Dorsolateral prefrontal cortex (tissue), 120 donors: ENCODE measurements at regions of chr15 and their contacts with region 1.

Region 1: DNA sequence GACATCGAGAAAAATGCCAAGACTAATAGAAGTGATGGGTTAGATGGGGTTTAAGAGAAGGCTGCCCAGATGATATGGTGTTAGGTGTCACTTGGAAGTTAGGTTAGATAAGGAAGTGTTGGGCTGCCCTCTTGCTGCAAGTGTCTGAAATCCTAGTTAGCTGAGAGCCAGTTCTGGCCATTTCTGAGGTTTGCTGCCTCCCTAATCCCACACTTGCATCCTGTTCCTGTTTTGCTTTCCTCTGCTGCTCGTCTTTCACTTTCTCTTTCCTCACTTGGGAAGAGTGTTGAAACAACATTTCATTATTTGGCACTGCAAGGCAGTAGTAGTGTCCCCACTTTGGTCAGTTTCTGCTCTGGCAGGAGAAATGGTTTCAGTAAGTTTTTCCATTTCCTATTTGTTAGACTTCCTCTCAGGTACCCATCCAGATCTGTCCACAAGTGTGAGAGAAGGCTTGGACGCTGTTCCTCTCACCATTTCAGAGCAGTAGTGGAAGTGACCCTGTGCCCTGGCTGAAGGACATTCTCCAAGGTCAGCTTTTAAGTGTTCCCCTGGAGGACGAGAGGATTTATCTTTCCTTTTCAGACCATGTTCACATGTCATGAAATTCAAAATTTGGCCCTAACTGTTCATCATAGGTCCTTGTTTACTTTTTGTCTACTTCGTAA is 93.3 kb downstream of the ADAMTSL3 start:
- DNase-seq: peak in 1 of 10 donors; percentile 40
- H3K4me3 ChIP-seq: no peak overlapping the region
- H3K27ac ChIP-seq: no peak overlapping the region
- H3K27me3 ChIP-seq: no peaks in the 10 kb centered on the region
- CTCF ChIP-seq: peak in 49 of 56 donors; percentile 0 to 68 (median 45)

Region 2: DNA sequence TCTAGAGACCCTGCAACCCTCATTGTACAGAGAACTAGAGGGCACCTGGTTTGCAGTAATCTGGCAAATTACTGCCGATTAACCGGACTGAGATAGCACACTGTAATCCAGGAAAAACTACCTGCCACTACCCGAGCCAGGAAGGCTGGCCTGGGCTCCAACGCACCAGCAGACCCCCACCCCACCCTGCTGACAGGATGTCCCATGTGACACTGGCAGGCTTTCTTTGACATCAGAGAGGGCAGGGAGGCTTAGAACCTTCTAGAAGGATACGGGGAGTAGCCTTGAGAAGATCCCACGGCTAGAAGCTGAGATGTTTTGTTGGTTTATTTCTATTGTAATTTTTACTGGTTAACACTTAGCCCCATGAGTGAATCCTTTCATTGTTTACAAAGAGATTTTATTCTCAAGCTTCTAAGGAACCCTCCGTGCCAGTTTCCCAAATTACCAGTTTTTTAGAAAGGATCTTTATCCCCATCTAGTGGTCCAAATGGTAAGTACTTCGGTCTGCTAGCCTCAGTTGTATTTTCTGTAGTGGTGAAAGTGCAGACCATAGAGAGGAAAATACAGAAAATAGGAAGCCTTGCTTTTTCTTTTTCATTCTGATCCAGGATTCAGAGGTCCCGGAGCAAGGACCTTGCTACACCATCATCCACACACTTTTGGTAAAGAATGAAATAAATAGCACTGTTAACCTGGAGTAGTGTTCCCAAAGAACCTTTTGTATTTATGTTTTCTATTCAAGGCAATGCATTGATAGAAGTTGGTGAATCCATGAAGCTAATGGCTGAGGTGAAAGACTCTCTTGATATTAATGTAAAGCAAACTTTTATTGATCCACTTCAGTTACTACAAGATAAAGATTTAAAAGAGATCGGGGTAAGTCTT is 175.1 kb before region 1 on chr15:
- intact Hi-C with region 1: loop called in 1 of 2 experiments (anchors 5 kb)
- DNase-seq: no peak
- H3K4me3 ChIP-seq: peak overlapping the region in 8 of 59 donors; percentile 5 to 34 (median 12)
- H3K27ac ChIP-seq: peak overlapping the region; percentile 44 to 100 (median 96)
- H3K27me3 ChIP-seq: no peaks in the 10 kb centered on the region
- CTCF ChIP-seq: peak; percentile 57 to 92 (median 82)